ENCODE measurements at regions of chr10 and their contacts with region 1.

Region 1: DNA sequence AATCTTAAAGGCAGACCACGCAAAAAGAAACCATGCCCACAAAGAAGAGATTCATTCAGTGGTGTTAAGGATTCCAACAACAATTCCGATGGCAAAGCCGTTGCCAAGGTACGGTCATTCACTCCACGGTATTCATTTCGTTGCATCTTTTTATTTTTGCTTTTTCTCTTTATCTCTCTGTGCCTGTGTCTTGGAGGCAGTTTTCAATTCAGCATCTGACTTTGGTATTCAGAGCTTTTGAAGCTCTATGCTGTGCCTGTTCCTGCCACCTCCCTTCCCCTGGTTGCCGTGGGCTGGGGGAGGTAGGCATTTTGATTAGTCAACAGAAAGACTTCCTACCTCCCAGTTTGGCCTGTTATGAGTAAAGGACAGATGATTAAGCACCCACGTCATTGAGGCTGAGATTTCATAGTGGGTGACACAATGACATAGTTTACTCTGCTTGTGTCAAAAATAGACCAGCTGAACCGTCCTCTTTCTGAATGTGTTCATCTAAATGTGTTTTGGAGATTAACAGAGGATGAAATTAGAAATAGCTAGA is 149.5 kb downstream of the ARID5B start:
- DNase-seq: peak; percentile 83 to 94 (median 88)
- H3K4me3 ChIP-seq: peak overlapping the region; percentile 69 to 82
- H3K4me3 Mint-ChIP-seq: peak overlapping the region; percentile 89 to 98 (median 91)
- H3K27ac ChIP-seq: peak overlapping the region; percentile 87
- H3K27ac Mint-ChIP-seq: peak overlapping the region; percentile 92 to 100 (median 98)
- H3K4me1 ChIP-seq: peaks cover 78% of the 10 kb centered on the region
- H3K4me1 Mint-ChIP-seq: peaks cover 67 to 98% (median 76%) of the 10 kb centered on the region in 4 donors
- H3K27me3 ChIP-seq: no peaks in the 10 kb centered on the region
- H3K27me3 Mint-ChIP-seq: no peaks in the 10 kb centered on the region

Region 2: GRCh38 chr10:61896854-61897661 is 153.9 kb before region 1 on chr10:
- CTCF ChIA-PET with region 1: interaction called, 228 read pairs
- POLR2A ChIA-PET with region 1: interaction called, 251 read pairs
- intact Hi-C with region 1: loop called (anchors 1 kb)
- DNase-seq: peak; percentile 71 to 78 (median 74)
- H3K4me3 ChIP-seq: peak overlapping the region; percentile 7 to 40
- H3K4me3 Mint-ChIP-seq: peak overlapping the region; percentile 67 to 97 (median 84)
- H3K27ac ChIP-seq: no peak overlapping the region
- H3K27ac Mint-ChIP-seq: peak overlapping the region; percentile 13 to 94 (median 92)
- H3K4me1 ChIP-seq: peaks cover 31% of the 10 kb centered on the region
- H3K4me1 Mint-ChIP-seq: peaks cover 18 to 41% (median 26%) of the 10 kb centered on the region in 4 donors
- H3K27me3 ChIP-seq: no peaks in the 10 kb centered on the region
- H3K27me3 Mint-ChIP-seq: no peaks in the 10 kb centered on the region

Region 3: DNA sequence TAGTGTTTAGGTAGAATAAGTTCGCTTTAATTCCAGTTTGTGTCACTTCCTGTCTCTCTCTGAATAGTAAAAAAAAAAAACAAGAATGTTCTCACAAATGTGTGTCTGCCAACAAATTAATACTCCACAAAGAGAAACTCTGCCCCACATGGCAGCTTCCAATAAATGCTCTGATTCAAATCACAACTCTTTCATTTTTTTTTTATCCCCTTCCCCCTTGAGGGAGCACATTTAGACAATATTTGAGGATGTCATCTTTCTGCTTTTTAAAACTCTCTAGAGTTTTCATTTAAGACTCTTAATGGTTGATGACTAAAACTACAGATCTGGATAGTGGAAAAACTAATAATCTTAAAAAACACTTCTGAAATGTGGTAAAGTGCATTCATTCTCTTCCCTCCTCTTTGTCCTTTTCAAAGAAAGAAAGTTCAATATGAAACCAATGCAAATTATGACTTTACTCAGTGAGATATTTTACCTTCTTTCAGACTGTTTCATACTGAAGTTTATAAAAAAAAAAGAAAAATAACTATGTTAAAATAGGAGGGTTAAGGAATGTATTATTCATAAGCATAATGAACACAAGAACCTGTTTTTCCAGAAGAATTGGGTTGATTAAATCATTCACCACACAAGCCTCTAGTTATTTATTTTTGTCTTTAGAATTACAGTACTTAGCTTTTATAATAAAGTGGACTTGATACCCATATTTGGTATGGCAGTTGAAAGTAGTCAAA is 107.1 kb before region 1 on chr10:
- CTCF ChIA-PET with region 1: interaction called, 4 read pairs
- POLR2A ChIA-PET with region 1: interaction called, 11 read pairs
- intact Hi-C with region 1: loop called (anchors 2 kb)
- DNase-seq: peak in 4 of 5 donors; percentile 56 to 68 (median 60)
- H3K4me3 ChIP-seq: peak overlapping the region in 1 of 2 donors; percentile 25
- H3K4me3 Mint-ChIP-seq: peak overlapping the region; percentile 72 to 91 (median 84)
- H3K27ac ChIP-seq: peak overlapping the region; percentile 56
- H3K27ac Mint-ChIP-seq: peak overlapping the region; percentile 89 to 98 (median 95)
- H3K4me1 ChIP-seq: peaks cover 64% of the 10 kb centered on the region
- H3K4me1 Mint-ChIP-seq: peaks cover 35 to 61% (median 48%) of the 10 kb centered on the region in 4 donors
- H3K27me3 ChIP-seq: no peaks in the 10 kb centered on the region
- H3K27me3 Mint-ChIP-seq: no peaks in the 10 kb centered on the region

Region 4: DNA sequence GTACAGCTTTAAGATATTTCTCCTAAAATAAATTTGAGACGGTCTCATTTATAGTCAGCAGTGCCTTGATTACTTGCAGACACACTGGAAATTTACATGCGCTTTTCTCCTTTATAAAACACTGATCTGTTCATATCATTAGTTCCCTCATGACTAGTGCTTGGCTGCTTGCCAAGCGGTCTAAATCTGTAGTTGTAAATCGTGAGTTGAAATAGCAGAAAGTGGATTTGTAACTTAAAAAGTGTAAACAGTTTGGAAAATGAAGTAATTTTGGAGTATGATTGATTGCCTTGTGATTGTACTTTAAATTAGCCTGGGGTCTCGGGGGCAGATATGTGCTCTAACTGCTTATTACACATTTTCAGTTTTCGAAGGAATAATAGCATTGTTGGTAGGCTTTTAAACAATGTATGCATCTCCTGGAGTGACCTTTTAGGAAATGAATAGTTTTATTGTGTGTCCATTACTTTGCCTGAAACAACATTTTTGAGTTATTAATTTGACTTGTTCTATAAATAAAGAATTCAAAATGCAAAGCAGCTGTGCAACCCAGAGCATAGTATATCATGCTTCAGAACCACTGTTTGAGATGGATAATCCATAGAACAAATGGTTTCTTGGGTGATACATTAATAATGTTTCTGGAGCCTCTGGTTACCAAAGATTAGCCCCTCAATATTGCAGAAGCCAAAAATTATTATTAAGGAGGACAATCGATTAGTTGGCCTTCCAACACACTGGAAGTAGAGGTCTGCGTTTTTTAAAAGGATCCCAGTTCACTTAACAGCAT is 76.2 kb before region 1 on chr10:
- CTCF ChIA-PET with region 1: no interaction called
- POLR2A ChIA-PET with region 1: no interaction called
- intact Hi-C with region 1: no loop called
- DNase-seq: no peak
- H3K4me3 ChIP-seq: no peak overlapping the region
- H3K4me3 Mint-ChIP-seq: no peak overlapping the region
- H3K27ac ChIP-seq: no peak overlapping the region
- H3K27ac Mint-ChIP-seq: peak overlapping the region in 1 of 7 donors; percentile 62
- H3K4me1 ChIP-seq: peaks cover 10% of the 10 kb centered on the region
- H3K4me1 Mint-ChIP-seq: peaks cover 13 to 29% (median 24%) of the 10 kb centered on the region in 4 donors
- H3K27me3 ChIP-seq: no peaks in the 10 kb centered on the region
- H3K27me3 Mint-ChIP-seq: no peaks in the 10 kb centered on the region

Region 5: GRCh38 chr10:62063795-62064472 is 13.0 kb after region 1 on chr10:
- CTCF ChIA-PET with region 1: interaction called, 10 read pairs
- POLR2A ChIA-PET with region 1: interaction called, 86 read pairs
- intact Hi-C with region 1: no loop called
- DNase-seq: no peak
- H3K4me3 ChIP-seq: no peak overlapping the region
- H3K4me3 Mint-ChIP-seq: peak overlapping the region in 4 of 8 donors; percentile 1 to 15 (median 9)
- H3K27ac ChIP-seq: no peak overlapping the region
- H3K27ac Mint-ChIP-seq: peak overlapping the region in 6 of 7 donors; percentile 15 to 91 (median 65)
- H3K4me1 ChIP-seq: peaks cover 52% of the 10 kb centered on the region
- H3K4me1 Mint-ChIP-seq: peaks cover 40 to 80% (median 60%) of the 10 kb centered on the region in 4 donors
- H3K27me3 ChIP-seq: no peaks in the 10 kb centered on the region
- H3K27me3 Mint-ChIP-seq: no peaks in the 10 kb centered on the region

Region 6: GRCh38 chr10:62082729-62083411 is 31.9 kb after region 1 on chr10:
- CTCF ChIA-PET with region 1: interaction called, 11 read pairs
- POLR2A ChIA-PET with region 1: interaction called, 133 read pairs
- intact Hi-C with region 1: loop called (anchors 2 kb)
- DNase-seq: peak; percentile 58 to 74 (median 64)
- H3K4me3 ChIP-seq: peak overlapping the region in 1 of 2 donors; percentile 3
- H3K4me3 Mint-ChIP-seq: peak overlapping the region; percentile 58 to 83 (median 73)
- H3K27ac ChIP-seq: peak overlapping the region; percentile 45
- H3K27ac Mint-ChIP-seq: peak overlapping the region; percentile 24 to 95 (median 89)
- H3K4me1 ChIP-seq: peaks cover 79% of the 10 kb centered on the region
- H3K4me1 Mint-ChIP-seq: peaks cover 44 to 77% (median 62%) of the 10 kb centered on the region in 4 donors
- H3K27me3 ChIP-seq: no peaks in the 10 kb centered on the region
- H3K27me3 Mint-ChIP-seq: no peaks in the 10 kb centered on the region

Region 7: DNA sequence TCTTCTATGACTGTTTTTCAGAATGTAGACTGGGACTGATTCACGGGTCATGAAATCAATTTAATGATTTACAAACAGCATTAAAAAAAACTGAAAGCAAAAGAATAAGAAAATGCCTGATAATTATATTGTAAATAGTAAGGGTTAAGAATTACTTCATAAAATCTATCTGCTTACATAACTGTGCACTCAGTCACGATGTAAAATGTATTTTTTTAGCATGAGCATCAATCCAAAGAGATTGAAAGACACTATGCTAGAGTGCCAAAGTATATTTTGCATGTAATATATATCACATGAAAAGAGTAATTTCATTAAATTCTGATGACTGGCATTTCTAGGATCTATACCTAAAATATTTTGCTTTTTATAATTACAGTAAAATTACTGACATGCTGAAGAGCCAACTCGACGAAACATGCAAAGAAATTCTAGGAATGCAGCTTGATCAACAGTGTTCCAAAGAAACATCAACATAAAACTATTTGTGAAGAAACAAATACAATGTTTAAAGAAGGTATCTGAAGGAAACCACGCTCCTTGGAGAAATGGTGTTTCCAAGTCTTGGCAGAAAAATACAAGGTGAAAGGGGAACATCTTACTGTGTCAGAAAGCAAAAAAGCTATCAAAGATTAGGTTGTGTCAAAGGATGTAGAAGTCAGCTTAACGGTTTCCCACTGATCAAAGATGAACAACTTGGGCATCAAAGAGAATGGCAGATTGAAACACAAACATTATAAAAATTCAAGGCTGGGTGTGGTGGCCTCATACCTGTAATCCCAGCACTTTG is 182.7 kb after region 1 on chr10:
- CTCF ChIA-PET with region 1: interaction called, 3 read pairs
- POLR2A ChIA-PET with region 1: interaction called, 39 read pairs
- intact Hi-C with region 1: no loop called
- DNase-seq: no peak
- H3K4me3 ChIP-seq: no peak overlapping the region
- H3K4me3 Mint-ChIP-seq: peak overlapping the region; percentile 60 to 85 (median 67)
- H3K27ac ChIP-seq: no peak overlapping the region
- H3K27ac Mint-ChIP-seq: peak overlapping the region in 6 of 7 donors; percentile 4 to 63 (median 36)
- H3K4me1 ChIP-seq: peaks cover 35% of the 10 kb centered on the region
- H3K4me1 Mint-ChIP-seq: peaks cover 15 to 53% (median 22%) of the 10 kb centered on the region in 4 donors
- H3K27me3 ChIP-seq: no peaks in the 10 kb centered on the region
- H3K27me3 Mint-ChIP-seq: no peaks in the 10 kb centered on the region

Region 8: DNA sequence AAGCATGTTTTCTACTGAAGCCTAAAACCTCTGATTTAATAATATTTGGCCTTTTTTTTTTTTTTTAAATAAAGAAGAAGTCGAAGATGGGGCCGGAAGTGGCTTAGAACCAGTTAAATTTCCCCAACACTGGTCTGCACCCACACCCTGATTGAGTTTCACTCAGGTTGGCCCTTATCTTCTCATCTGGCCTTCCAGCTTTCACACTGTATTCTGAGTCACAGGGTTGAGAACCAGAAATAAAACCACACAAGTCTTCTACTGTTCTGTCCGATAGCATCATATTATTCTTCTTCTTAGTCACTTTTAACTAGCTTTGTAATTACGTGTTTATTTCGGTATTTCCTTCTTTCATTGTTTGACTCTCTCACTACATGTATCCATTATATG is 333.1 kb after region 1 on chr10:
- CTCF ChIA-PET with region 1: interaction called, 3 read pairs
- POLR2A ChIA-PET with region 1: no interaction called
- intact Hi-C with region 1: loop called (anchors 10 kb)
- DNase-seq: peak; percentile 70 to 90 (median 72)
- H3K4me3 ChIP-seq: peak overlapping the region in 1 of 2 donors; percentile 20
- H3K4me3 Mint-ChIP-seq: peak overlapping the region; percentile 41 to 69 (median 62)
- H3K27ac ChIP-seq: peak overlapping the region; percentile 52
- H3K27ac Mint-ChIP-seq: peak overlapping the region; percentile 70 to 88 (median 81)
- H3K4me1 ChIP-seq: peaks cover 48% of the 10 kb centered on the region
- H3K4me1 Mint-ChIP-seq: peaks cover 42 to 87% (median 57%) of the 10 kb centered on the region in 4 donors
- H3K27me3 ChIP-seq: no peaks in the 10 kb centered on the region
- H3K27me3 Mint-ChIP-seq: no peaks in the 10 kb centered on the region